Left colon (tissue), 2 donors: ENCODE measurements at regions of chr5 and their contacts with region 1.

Region 1: GRCh38 chr5:64612344-64612961 is 77.8 kb upstream of the SHISAL2B start:
- DNase-seq: no peak
- ATAC-seq: peak; percentile 29

Region 2: DNA sequence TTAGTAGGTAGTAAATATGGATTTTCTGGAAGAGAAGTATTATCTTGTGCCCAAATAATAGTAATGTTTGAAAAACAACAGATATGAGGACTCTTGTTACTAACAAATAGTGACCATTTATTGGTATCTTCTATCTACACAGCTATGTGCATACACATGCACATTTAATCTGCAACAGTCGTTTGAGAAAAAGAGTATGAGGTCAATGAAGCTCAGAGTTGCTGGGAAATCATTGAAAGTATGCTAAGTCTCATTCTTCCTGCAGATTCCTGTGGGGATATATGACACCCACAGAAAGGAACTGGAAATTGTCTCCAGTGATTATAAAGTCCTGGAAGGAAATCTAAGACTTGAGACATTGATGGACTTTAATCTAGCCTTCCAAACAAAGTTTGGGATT is 486.9 kb before region 1 on chr5:
- intact Hi-C with region 1: no loop called
- DNase-seq: no peak
- ATAC-seq: no peak

Region 3: GRCh38 chr5:64147849-64148441 is 464.5 kb before region 1 on chr5:
- intact Hi-C with region 1: loop called in 1 of 2 experiments (anchors 10 kb)
- DNase-seq: peak in 1 of 2 donors; percentile 37
- ATAC-seq: peak; percentile 25

Region 4: DNA sequence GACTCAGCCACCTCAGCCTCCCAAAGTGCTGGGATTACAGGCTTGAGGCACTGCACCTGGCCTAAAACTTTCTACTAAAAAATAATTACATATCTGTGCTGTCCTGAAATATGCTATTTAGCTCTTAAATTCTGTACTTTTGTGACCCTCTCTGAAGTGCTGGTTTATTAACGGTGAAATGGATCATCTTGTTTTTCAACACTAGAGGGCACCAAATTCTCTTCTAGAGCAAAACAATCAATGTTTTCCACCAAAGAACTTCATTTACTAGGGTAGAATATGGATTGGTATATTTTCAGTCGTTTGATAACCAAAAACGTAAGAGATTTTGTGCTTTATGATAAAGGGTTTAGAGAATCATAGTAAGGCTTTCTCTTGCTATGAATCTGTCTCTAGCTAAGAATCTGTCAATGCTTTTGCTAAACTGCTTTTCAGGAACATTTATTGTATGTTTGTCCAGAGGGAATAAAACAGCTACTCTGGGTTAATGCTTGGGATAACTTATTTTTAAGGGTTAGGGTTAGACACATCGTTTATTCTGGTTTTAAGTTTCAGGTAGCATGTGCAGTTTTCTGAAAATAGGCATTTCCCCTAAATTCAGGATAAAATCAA is 383.2 kb before region 1 on chr5:
- intact Hi-C with region 1: loop called in 1 of 2 experiments (anchors 2 kb)
- DNase-seq: no peak
- ATAC-seq: no peak

Region 5: DNA sequence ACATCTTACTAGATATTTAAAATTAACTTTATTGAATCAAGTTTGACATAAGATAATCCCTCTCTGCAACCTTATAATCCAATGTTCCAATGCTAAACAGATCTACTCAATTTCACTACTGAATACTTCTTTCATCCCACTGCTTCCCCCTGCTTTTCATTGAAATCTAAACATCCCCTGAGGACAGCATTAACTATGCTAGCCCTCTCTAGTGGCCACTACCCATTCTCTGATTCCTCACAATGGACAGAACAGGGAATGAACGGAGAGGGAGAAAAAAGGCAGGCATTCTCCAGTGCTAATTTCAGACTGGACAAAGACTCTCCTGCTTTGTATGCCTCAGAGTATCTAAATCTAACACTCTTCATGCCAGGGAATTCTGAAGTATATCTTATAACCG is 160.9 kb before region 1 on chr5:
- intact Hi-C with region 1: no loop called
- DNase-seq: no peak
- ATAC-seq: no peak